ENCODE measurements at regions of chr7 and their contacts with region 1.

Region 1: DNA sequence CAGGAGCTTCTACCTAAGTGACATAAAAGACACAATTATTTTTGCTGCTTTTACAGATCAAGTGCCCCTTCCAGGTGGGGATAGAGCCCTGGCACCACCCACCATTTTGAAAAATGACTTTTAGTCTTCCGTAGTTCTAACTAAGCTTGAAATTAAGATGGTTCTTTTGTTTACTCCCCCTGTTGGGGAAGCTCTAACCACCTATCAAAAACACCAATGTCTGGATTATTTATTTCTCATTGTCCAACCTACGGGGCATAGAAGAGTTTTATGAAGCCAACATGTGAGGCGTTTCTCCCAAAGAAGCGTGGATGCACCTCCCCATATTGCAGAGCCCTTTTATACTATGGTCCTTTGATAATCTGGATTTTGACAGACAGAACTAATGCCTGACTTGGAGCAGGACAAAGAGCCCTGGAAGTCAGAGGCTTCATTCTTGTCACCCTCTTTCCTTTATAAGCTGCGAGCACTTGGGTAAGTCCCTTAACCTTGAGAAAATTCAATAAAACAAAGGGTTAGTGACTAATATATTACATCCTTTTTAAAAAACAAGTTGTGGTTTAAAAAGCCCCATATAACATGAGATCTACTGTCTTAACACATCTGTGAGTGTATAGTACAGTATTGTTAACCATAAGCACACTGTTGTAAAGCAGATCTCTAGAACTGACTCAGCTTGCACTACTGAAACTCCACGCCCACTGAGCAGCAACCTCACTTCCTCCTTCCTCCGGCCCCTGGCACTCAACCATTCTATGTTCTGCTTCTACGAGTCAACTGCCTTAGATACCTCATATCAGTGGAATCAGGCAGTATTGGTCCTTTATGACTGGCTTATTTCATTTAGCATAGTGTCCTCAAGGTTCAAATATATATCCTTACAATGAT is 67.5 kb downstream of the ATXN7L1 start:
- DNase-seq: peak; percentile 19 to 90 (median 71)
- ATAC-seq: peak; percentile 90
- H3K4me3 ChIP-seq: peak overlapping the region in 1 of 2 experiments; percentile 6
- H3K4me3 Mint-ChIP-seq: no peak overlapping the region
- H3K27ac ChIP-seq: peak overlapping the region; percentile 23 to 87
- H3K27ac Mint-ChIP-seq: peak overlapping the region; percentile 24
- H3K4me1 ChIP-seq: peaks cover 36% of the 10 kb centered on the region
- H3K4me1 Mint-ChIP-seq: peaks cover 58% of the 10 kb centered on the region
- H3K27me3 ChIP-seq: no peaks in the 10 kb centered on the region
- H3K27me3 Mint-ChIP-seq: no peaks in the 10 kb centered on the region
- CTCF ChIP-seq: no peak

Region 2: GRCh38 chr7:105826143-105826542 is 17.2 kb after region 1 on chr7:
- CTCF ChIA-PET with region 1: interaction called, 3 read pairs
- POLR2A ChIA-PET with region 1: interaction called, 3 read pairs
- intact Hi-C with region 1: loop called in 1 of 2 experiments (anchors 2 kb)
- DNase-seq: no peak
- ATAC-seq: no peak
- H3K4me3 ChIP-seq: no peak overlapping the region
- H3K4me3 Mint-ChIP-seq: no peak overlapping the region
- H3K27ac ChIP-seq: no peak overlapping the region
- H3K27ac Mint-ChIP-seq: no peak overlapping the region
- H3K4me1 ChIP-seq: no peaks in the 10 kb centered on the region
- H3K4me1 Mint-ChIP-seq: peaks cover 26% of the 10 kb centered on the region
- H3K27me3 ChIP-seq: no peaks in the 10 kb centered on the region
- H3K27me3 Mint-ChIP-seq: no peaks in the 10 kb centered on the region
- CTCF ChIP-seq: no peak

Region 3: GRCh38 chr7:105849122-105849855 is 40.3 kb after region 1 on chr7:
- CTCF ChIA-PET with region 1: no interaction called
- POLR2A ChIA-PET with region 1: interaction called, 3 read pairs
- intact Hi-C with region 1: loop called (anchors 5 kb)
- DNase-seq: peak; percentile 30 to 91 (median 71)
- ATAC-seq: peak; percentile 86
- H3K4me3 ChIP-seq: peak overlapping the region in 1 of 2 experiments; percentile 18
- H3K4me3 Mint-ChIP-seq: peak overlapping the region; percentile 52
- H3K27ac ChIP-seq: peak overlapping the region; percentile 44 to 72
- H3K27ac Mint-ChIP-seq: peak overlapping the region; percentile 90
- H3K4me1 ChIP-seq: peaks cover 52% of the 10 kb centered on the region
- H3K4me1 Mint-ChIP-seq: peaks cover 74% of the 10 kb centered on the region
- H3K27me3 ChIP-seq: no peaks in the 10 kb centered on the region
- H3K27me3 Mint-ChIP-seq: no peaks in the 10 kb centered on the region
- CTCF ChIP-seq: no peak